Activated B cell treated with CpG ODN at 0.5 μM for 24 hours (primary cell): ENCODE measurements at regions of chr11 and their contacts with region 1.

Region 1: DNA sequence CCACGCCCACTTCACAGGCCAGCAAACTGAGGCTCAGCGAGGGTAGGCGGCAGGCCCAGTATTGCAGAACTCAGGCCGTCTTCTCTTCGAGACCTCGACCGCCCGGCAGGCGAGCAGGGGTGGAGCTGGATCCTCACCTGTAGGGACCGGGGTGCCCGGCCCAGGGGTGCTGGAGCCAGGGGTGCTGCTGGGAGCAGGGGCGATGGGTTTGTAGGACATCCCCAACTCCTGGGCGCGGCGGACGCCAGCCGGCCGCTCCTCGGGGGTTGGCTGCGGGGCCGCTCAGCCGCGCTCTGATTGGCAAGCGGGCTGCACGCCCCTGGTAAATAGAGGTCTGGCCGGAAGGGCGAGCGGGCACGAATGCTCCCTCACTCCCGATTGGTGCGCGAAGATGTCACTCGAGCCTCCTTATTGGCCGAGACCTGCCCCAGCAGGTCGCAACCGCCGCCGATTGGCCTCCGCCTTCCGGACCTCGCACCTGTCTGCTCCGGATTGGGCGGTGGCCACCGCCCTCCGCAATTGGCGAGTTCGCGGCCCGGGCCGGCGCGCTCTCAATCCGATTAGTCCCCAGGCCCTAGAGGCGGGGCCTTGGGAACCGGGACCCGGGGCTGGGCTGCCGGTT is at the start of gene CDK2AP2:
- DNase-seq: peak; percentile 90
- ATAC-seq: peak; percentile 77
- H3K4me3 Mint-ChIP-seq: peak within 1 kb of the TSS; percentile 88
- H3K27ac Mint-ChIP-seq: peak within 1 kb of the TSS; percentile 94
- H3K4me1 Mint-ChIP-seq: peaks cover 42% of the 10 kb centered on the region
- H3K27me3 Mint-ChIP-seq: no peaks in the 10 kb centered on the region
- CTCF ChIP-seq: no peak
- total RNA-seq, gene CDK2AP2: 67.1 and 68.5 TPM in 2 replicates

Region 2: DNA sequence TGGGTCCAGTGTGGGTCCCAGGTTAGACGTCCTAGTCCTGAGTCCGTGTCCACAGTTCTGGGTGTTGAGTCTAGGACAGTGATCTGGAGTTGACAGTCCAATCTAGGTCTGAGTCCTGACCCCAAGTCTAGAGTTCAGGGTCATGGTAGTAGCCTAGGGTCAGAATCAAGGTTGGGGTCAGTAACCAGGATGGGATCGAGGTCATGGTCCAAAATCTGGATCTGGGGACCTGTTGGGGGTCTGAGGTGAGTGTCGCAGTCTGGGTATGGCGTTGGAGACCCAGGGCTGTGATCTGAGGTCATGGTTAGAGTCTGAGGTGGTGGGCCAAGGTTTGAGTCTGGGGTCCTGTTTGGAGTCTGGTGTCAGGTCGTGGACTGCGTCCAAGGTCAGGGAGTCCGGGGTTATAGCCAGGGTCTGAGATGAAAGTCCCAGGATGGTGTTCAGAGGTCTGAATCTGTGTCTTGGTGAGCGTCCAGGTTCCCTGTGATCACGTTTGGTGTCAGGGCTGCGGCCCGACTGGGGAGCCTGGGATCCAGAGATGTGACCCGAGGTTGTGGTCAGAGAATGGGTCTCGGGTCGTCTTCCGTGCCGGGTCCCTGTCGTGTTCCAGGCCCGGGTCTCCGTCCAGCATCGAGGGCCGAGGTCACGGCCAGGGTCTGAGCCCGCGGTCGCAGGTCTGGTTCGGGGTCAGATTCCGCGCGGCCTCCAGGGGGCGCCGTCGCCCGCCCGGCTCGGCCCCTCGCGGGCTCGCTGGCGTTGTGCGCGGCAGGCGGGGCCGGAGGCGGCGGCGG is 242.1 kb before region 1 on chr11:
- CTCF ChIA-PET with region 1: no interaction called
- POLR2A ChIA-PET with region 1: no interaction called
- intact Hi-C with region 1: loop called (anchors 2 kb)
- DNase-seq: peak; percentile 90
- ATAC-seq: peak; percentile 62
- H3K4me3 Mint-ChIP-seq: peak overlapping the region; percentile 77
- H3K27ac Mint-ChIP-seq: peak overlapping the region; percentile 84
- H3K4me1 Mint-ChIP-seq: peaks cover 67% of the 10 kb centered on the region
- H3K27me3 Mint-ChIP-seq: peaks cover 2% of the 10 kb centered on the region
- CTCF ChIP-seq: no peak

Region 3: DNA sequence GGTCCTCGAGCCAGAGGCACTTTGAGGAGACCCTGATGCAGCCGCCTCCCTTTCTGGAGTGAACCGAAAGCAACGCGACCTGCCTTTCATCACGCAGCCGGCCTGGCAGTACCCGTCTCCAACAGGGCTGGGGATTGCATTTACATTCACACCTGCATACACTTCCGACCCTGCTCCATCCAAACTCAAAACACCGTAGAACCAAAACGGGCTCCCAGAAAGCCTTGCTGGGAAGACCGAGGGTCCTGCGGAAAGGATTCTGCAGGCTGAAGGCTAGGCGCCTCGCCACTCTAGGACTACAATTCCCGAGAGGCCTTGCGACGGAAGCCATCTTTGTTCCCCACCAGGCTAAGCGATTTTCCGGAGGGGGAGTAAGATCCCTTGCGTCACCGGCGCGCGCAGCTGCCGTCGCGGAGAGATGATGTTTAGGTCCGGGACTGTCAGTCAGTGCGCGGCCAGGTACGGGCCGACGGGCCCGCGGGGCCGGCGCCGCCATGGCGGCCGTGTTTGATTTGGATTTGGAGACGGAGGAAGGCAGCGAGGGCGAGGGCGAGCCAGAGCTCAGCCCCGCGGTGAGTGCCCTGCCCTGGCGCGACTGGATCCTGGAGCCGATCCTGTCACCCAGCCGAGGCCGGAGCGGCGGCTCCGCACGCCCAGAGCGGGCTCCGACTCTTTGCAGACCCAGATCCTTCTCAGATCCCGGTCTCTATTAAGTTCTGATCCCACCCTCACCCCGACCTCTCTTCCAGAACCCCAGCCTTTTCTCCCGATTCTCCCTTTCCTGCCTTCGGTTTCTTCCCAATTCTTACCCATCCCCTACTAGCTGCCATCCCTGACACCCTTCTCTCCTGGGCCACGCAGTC is 79.7 kb before region 1 on chr11 and contains the start of gene RPS6KB2:
- CTCF ChIA-PET with region 1: no interaction called
- POLR2A ChIA-PET with region 1: interaction called, 12 read pairs
- intact Hi-C with region 1: loop called (anchors 1 kb)
- DNase-seq: peak; percentile 99
- ATAC-seq: peak; percentile 81
- H3K4me3 Mint-ChIP-seq: peak within 1 kb of the TSS; percentile 98
- H3K27ac Mint-ChIP-seq: peak within 1 kb of the TSS; percentile 93
- H3K4me1 Mint-ChIP-seq: peaks cover 41% of the 10 kb centered on the region
- H3K27me3 Mint-ChIP-seq: no peaks in the 10 kb centered on the region
- CTCF ChIP-seq: no peak
- total RNA-seq, gene RPS6KB2: 66.9 and 74.5 TPM in 2 replicates

Region 4: DNA sequence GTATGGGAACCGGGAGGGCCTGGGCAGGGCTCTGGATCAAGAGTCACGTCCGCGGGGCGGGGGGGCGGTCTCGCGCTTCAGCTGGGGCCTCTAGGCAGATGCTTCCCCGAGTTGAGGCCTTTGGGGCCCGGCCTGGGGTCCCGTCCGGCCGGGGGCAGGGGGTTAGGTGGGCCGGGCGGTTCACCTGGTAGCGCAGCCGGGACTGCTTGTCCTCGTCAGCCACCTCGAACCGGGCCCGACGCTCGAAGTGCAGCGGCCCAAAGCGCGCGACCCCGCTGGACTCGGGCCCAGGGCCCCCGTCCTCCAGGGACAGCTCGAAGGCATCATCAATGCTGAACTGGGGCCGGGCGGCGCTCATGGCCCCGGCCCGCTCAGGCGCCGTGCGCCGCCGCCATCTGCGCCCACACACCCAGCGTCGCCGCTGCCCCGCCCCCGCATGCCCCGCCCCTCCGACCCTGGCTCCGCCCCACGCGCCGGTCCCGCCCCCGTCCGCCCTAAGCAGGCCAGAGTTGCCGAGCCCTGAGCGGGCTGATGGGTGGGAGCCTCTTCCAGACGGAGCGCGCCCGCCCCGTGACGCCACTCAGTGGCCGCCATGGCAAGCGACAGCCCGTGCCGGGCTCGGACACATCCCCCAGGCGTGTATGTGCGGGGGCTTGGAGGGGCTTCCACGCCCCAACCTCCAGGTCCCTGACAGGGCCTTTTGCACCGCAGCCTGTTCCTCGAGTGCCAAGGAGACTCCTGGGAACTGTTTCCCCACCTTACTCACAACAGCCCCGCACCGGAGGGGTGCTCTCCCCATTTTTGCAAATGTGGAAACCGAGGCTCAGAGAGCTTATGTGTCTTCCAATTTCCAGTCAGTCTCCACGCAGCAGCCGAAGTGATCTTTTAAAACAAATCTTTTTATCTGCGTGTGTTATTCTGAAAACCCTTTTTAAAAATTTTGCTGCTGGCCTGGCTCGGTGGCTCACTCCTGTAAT is 38.9 kb before region 1 on chr11 and contains the start of gene TMEM134:
- CTCF ChIA-PET with region 1: interaction called, 4 read pairs
- POLR2A ChIA-PET with region 1: interaction called, 6 read pairs
- intact Hi-C with region 1: loop called (anchors 1 kb)
- DNase-seq: peak; percentile 88
- ATAC-seq: peak; percentile 73
- H3K4me3 Mint-ChIP-seq: peak within 1 kb of the TSS; percentile 89
- H3K27ac Mint-ChIP-seq: peak within 1 kb of the TSS; percentile 91
- H3K4me1 Mint-ChIP-seq: peaks cover 49% of the 10 kb centered on the region
- H3K27me3 Mint-ChIP-seq: no peaks in the 10 kb centered on the region
- CTCF ChIP-seq: no peak
- total RNA-seq, gene TMEM134: 76.0 and 83.5 TPM in 2 replicates

Region 5: DNA sequence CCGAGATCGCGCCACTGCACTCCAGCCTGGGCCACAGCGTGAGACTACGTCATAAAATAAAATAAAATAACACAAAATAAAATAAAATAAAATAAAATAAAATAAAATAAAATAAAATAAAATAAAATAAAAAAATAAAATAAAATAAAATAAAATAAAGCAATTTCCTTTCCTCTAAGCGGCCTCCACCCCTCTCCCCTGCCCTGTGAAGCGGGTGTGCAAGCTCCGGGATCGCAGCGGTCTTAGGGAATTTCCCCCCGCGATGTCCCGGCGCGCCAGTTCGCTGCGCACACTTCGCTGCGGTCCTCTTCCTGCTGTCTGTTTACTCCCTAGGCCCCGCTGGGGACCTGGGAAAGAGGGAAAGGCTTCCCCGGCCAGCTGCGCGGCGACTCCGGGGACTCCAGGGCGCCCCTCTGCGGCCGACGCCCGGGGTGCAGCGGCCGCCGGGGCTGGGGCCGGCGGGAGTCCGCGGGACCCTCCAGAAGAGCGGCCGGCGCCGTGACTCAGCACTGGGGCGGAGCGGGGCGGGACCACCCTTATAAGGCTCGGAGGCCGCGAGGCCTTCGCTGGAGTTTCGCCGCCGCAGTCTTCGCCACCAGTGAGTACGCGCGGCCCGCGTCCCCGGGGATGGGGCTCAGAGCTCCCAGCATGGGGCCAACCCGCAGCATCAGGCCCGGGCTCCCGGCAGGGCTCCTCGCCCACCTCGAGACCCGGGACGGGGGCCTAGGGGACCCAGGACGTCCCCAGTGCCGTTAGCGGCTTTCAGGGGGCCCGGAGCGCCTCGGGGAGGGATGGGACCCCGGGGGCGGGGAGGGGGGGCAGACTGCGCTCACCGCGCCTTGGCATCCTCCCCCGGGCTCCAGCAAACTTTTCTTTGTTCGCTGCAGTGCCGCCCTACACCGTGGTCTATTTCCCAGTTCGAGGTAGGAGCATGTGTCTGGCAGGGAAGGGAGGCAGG is 75.6 kb after region 1 on chr11 and contains the start of gene GSTP1:
- CTCF ChIA-PET with region 1: no interaction called
- POLR2A ChIA-PET with region 1: interaction called, 6 read pairs
- intact Hi-C with region 1: loop called (anchors 1 kb)
- DNase-seq: peak; percentile 84
- ATAC-seq: peak; percentile 76
- H3K4me3 Mint-ChIP-seq: peak within 1 kb of the TSS; percentile 89
- H3K27ac Mint-ChIP-seq: peak within 1 kb of the TSS; percentile 99
- H3K4me1 Mint-ChIP-seq: peaks cover 76% of the 10 kb centered on the region
- H3K27me3 Mint-ChIP-seq: no peaks in the 10 kb centered on the region
- CTCF ChIP-seq: no peak
- total RNA-seq, gene GSTP1: 331 and 362 TPM in 2 replicates

Region 6: GRCh38 chr11:67656278-67656922 is 148.4 kb after region 1 on chr11:
- CTCF ChIA-PET with region 1: no interaction called
- POLR2A ChIA-PET with region 1: no interaction called
- intact Hi-C with region 1: loop called (anchors 5 kb)
- DNase-seq: no peak
- ATAC-seq: peak; percentile 43
- H3K4me3 Mint-ChIP-seq: no peak overlapping the region
- H3K27ac Mint-ChIP-seq: no peak overlapping the region
- H3K4me1 Mint-ChIP-seq: peaks cover 8% of the 10 kb centered on the region
- H3K27me3 Mint-ChIP-seq: no peaks in the 10 kb centered on the region
- CTCF ChIP-seq: no peak